Heart right ventricle (tissue), 16 donors: ENCODE measurements at regions of chr12 and their contacts with region 1.

Region 1: GRCh38 chr12:112170376-112170775 is 45.0 kb downstream of the TRAFD1 start:
- DNase-seq: no peak
- ATAC-seq: peak in 2 of 8 donors; percentile 65
- H3K4me3 ChIP-seq: no peak overlapping the region
- H3K27ac ChIP-seq: peak overlapping the region in 1 of 10 donors; percentile 23
- H3K4me1 ChIP-seq: no peaks in the 10 kb centered on the region
- H3K27me3 ChIP-seq: no peaks in the 10 kb centered on the region
- CTCF ChIP-seq: peak in 8 of 9 donors; percentile 6 to 48 (median 36)

Region 2: DNA sequence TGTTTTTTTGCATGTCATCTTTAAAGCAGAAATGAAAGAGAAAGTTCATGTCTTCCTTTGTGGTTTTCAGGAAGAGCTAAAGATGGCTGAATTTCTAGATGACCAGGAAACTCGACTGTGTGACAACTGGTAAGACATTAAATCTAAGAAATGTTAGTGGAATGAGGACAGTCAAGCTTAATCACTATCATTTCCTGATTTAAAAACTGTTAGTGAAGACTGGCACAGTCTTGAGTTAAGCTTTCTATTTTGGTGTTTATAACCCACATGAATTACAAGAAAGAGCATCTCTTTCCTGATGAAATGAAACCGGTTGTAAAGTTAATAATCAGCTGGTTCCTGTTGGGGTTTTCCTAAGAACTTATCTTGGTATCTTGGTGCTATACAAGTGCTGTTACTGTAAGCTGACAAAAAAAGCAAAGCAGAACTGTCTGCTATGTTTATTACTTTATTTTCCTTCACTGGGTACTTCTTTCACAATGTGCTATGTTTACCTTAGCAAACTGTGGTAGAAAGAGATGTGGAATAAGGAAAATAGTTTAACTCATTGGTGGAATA is 39.9 kb before region 1 on chr12:
- intact Hi-C with region 1: no loop called
- DNase-seq: no peak
- ATAC-seq: peak in 1 of 8 donors; percentile 27
- H3K4me3 ChIP-seq: peak overlapping the region in 6 of 10 donors; percentile 4 to 37 (median 17)
- H3K27ac ChIP-seq: peak overlapping the region in 9 of 10 donors; percentile 53 to 90 (median 65)
- H3K4me1 ChIP-seq: peaks cover 3 to 80% (median 64%) of the 10 kb centered on the region in 9 donors
- H3K27me3 ChIP-seq: no peaks in the 10 kb centered on the region
- CTCF ChIP-seq: no peak

Region 3: GRCh38 chr12:113161414-113162016 is 991.1 kb after region 1 on chr12:
- intact Hi-C with region 1: loop called in 1 of 10 experiments (anchors 5 kb)
- DNase-seq: no peak
- ATAC-seq: no peak
- H3K4me3 ChIP-seq: no peak overlapping the region
- H3K27ac ChIP-seq: no peak overlapping the region
- H3K4me1 ChIP-seq: peaks cover 0 to 3% (median 0%) of the 10 kb centered on the region in 9 donors
- H3K27me3 ChIP-seq: peaks cover 0 to 3% (median 0%) of the 10 kb centered on the region in 7 donors
- CTCF ChIP-seq: no peak